MCF 10A (cell line): ENCODE measurements at regions of chrX and their contacts with region 1.

Region 1: GRCh38 chrX:78048052-78048451 is 56.0 kb upstream of the PGK1 start:
- DNase-seq: no peak
- H3K4me3 Mint-ChIP-seq: no peak overlapping the region
- H3K27ac Mint-ChIP-seq: no peak overlapping the region
- H3K4me1 Mint-ChIP-seq: no peaks in the 10 kb centered on the region
- H3K27me3 Mint-ChIP-seq: no peaks in the 10 kb centered on the region
- CTCF ChIP-seq: no peak

Region 2: GRCh38 chrX:77276742-77277141 is 771.3 kb before region 1 on chrX:
- CTCF ChIA-PET with region 1: no interaction called
- POLR2A ChIA-PET with region 1: no interaction called
- intact Hi-C with region 1: no loop called
- DNase-seq: no peak
- H3K4me3 Mint-ChIP-seq: no peak overlapping the region
- H3K27ac Mint-ChIP-seq: no peak overlapping the region
- H3K4me1 Mint-ChIP-seq: no peaks in the 10 kb centered on the region
- H3K27me3 Mint-ChIP-seq: no peaks in the 10 kb centered on the region
- CTCF ChIP-seq: no peak

Region 3: GRCh38 chrX:78035061-78035460 is 13.0 kb before region 1 on chrX:
- CTCF ChIA-PET with region 1: interaction called, 10 read pairs
- POLR2A ChIA-PET with region 1: no interaction called
- intact Hi-C with region 1: no loop called
- DNase-seq: no peak
- H3K4me3 Mint-ChIP-seq: no peak overlapping the region
- H3K27ac Mint-ChIP-seq: no peak overlapping the region
- H3K4me1 Mint-ChIP-seq: no peaks in the 10 kb centered on the region
- H3K27me3 Mint-ChIP-seq: no peaks in the 10 kb centered on the region
- CTCF ChIP-seq: no peak